H1 (cell line): ENCODE measurements at regions of chr9 and their contacts with region 1.

Region 1: GRCh38 chr9:92728831-92729734 is 35.5 kb downstream of the BICD2 start:
- DNase-seq: peak in 1 of 2 experiments; percentile 39
- H3K4me3 ChIP-seq: no peak overlapping the region
- H3K27ac ChIP-seq: no peak overlapping the region
- H3K4me1 ChIP-seq: peaks cover 0 to 1% (median 0%) of the 10 kb centered on the region in 4 experiments; a peak in 1 of 7 replicates
- H3K27me3 ChIP-seq: no peaks in the 10 kb centered on the region
- CTCF ChIP-seq: peak; percentile 64 to 66 (median 66)
- EP300 ChIP-seq: no peak
- POLR2A ChIP-seq: no peak
- RAD21 ChIP-seq: peak; percentile 65 to 69

Region 2: DNA sequence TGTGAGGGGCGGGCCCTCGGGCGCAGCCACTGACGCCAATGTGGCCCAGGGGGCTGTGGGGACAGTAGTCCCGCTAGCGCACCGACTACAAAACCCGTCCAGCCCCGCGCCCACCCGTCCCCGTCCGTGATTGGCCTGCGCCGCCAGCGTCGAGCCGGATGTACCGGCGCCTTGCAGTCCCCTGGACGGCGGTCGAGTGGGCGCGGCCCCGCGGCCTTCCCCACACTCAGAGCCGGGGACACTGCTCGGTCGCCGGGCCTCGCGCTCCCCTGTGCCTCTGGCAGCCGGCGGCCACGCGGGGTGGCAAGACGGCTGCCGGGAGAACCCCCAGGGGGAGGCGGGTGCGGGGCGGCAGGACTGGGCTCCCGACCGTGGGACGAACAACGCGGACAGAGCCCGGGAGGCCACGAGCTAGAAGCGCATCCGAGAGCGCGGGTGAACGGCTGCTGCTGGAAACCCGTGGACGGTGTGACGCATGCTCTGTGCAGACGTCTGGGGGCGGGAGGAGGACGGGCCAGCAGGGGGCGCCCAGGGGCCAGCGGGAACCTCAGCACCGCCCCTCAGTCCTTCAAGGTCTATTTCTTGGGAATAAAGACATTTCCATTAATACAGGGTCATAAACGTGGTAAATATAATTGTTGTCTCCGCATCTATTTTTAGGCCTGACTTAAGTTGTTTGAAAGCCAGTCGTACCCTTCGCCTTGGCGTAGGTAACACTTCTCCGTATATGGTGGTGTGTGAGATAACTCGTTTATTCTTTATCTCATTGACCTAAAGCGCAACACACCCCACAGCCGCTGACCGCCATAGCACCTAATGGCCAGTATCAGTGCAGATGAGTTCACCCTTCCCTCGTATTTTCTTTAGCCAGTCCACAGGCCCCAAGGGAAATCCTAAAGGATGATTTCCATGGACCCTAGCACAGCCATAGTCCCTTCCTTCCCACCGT is 36.2 kb after region 1 on chr9:
- CTCF ChIA-PET with region 1: interaction called, 12 read pairs
- POLR2A ChIA-PET with region 1: no interaction called
- DNase-seq: peak; percentile 95
- H3K4me3 ChIP-seq: peak overlapping the region; percentile 77 to 98 (median 80)
- H3K27ac ChIP-seq: peak overlapping the region; percentile 97
- H3K4me1 ChIP-seq: peaks cover 0 to 25% (median 8%) of the 10 kb centered on the region in 4 experiments; a peak in 5 of 7 replicates
- H3K27me3 ChIP-seq: no peaks in the 10 kb centered on the region
- CTCF ChIP-seq: peak; percentile 81 to 88 (median 81)
- EP300 ChIP-seq: no peak
- POLR2A ChIP-seq: peak in 1 of 2 experiments; percentile 79; a peak in 2 of 3 replicates
- RAD21 ChIP-seq: peak; percentile 56 to 63; a peak in 3 of 4 replicates

Region 3: DNA sequence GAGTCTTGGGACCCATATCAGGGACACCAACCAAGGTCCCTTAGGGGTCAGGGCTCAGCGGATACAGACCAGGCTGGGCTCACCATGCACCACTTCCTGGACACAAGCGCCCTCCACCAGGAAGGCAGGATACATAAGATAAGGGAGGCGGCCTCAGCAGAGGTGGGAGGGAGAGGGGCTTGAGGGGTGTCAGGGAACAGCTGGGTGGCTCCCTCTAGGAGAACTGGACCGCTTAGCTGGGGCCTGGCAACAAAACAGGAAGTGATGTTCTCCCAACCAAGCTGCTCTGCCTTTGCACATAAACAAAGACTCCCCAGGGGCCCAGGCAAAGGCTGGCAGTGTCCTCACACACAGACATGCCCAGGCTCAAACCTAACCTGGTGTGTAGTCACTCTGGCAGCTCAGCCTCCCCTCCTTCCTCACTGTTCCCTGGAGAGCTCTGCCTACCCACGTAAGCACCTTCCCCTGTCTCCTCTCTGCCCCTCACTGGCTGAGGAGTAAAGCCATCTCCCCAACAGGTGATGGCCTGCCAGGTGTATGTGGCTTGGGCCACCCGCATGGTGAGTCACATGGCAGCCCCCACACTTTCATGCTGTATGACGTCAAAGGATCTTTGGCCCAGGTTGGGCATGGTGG is 41.4 kb after region 1 on chr9:
- CTCF ChIA-PET with region 1: interaction called, 12 read pairs
- POLR2A ChIA-PET with region 1: no interaction called
- DNase-seq: no peak
- H3K4me3 ChIP-seq: no peak overlapping the region
- H3K27ac ChIP-seq: peak overlapping the region; percentile 38; the same call in 1 of the 2 replicates
- H3K4me1 ChIP-seq: peaks cover 0 to 11% (median 3%) of the 10 kb centered on the region in 4 experiments; a peak in 3 of 7 replicates
- H3K27me3 ChIP-seq: no peaks in the 10 kb centered on the region
- CTCF ChIP-seq: no peak
- EP300 ChIP-seq: no peak
- POLR2A ChIP-seq: peak in 1 of 2 experiments; percentile 51; a peak in 1 of 3 replicates
- RAD21 ChIP-seq: no peak

Region 4: DNA sequence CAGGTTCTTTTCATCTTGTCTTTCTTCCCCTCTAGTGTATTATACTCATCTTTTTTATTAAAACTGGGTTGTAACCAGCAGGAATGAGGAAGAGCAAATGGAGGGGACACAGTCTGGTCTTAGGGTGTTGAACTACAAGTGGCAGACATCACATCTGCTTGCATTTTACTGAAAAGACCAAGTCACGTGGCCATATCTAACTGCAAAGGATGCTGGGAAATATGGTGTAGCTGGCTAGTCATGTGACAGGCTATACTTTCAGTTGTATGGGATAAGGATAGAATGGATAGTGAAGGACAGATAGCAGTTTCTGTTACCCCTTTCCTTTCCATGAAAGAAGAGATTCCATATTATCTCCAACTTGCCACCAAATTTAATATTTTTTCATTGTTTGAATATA is 205.2 kb after region 1 on chr9:
- CTCF ChIA-PET with region 1: no interaction called
- POLR2A ChIA-PET with region 1: no interaction called
- DNase-seq: no peak
- H3K4me3 ChIP-seq: no peak overlapping the region
- H3K27ac ChIP-seq: no peak overlapping the region
- H3K4me1 ChIP-seq: no peaks in the 10 kb centered on the region
- H3K27me3 ChIP-seq: no peaks in the 10 kb centered on the region
- CTCF ChIP-seq: no peak
- EP300 ChIP-seq: no peak
- POLR2A ChIP-seq: no peak
- RAD21 ChIP-seq: no peak